Posterior vena cava (tissue), 2 donors: ENCODE measurements at regions of chr6 and their contacts with region 1.

Region 1: GRCh38 chr6:132161283-132161682 is 210.1 kb upstream of the CCN2 start:
- DNase-seq: no peak

Region 2: GRCh38 chr6:131923356-131923755 is 237.9 kb before region 1 on chr6:
- intact Hi-C with region 1: loop called in 1 of 2 experiments (anchors 5 kb)
- DNase-seq: no peak

Region 3: DNA sequence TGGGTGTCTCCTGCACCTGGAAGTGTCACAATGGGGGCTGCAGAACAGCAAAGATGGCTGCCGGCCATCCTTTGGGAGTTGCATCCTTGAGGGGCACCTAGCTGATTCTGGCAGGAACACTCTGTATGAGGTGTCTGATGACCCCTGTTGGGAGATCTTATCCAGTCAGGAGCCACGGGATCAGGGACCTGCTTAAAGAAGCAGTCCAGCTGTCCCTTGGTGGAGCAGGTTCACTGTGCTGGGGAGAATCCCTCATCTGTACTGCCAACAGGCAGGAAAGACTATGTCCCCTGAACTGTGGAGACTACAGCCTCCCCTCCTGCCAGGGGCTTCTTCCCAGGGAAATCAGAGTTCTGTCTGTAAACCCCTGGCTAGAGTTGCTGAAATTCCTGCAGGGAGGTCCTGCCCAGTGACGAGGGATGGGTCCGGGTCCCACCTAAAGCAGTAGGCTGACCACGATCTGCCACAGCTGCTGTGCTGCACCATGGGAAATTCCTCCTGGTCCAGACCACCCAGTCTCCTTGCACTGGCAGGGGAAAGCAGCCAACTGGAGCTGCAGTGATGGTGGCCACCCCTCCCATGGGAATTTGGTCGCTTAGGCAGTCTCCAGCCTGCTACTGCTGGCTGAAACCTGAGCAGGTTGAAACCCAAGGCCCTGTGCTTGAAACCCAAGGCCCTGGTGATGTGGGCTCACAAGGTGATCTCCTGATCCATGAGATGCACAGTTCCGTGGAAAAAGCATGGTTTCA is 263.7 kb after region 1 on chr6:
- intact Hi-C with region 1: no loop called
- DNase-seq: no peak

Region 4: GRCh38 chr6:132587424-132587823 is 426.1 kb after region 1 on chr6:
- intact Hi-C with region 1: no loop called
- DNase-seq: no peak

Region 5: GRCh38 chr6:132669690-132670291 is 508.5 kb after region 1 on chr6:
- intact Hi-C with region 1: no loop called
- DNase-seq: no peak